Panc1 (cell line): ENCODE measurements at regions of chr13 and their contacts with region 1.

Region 1: GRCh38 chr13:100088644-100089464 is at the start of gene PCCA:
- DNase-seq: peak; percentile 45
- ATAC-seq: peak; percentile 97
- H3K4me3 ChIP-seq: peak within 1 kb of the TSS; percentile 78 to 82
- H3K27ac ChIP-seq: peak within 1 kb of the TSS; percentile 86
- H3K4me1 ChIP-seq: peaks cover 5% of the 10 kb centered on the region
- H3K27me3 ChIP-seq: no peaks in the 10 kb centered on the region
- CTCF ChIP-seq: no peak
- total RNA-seq, gene PCCA: 14.7 TPM

Region 2: DNA sequence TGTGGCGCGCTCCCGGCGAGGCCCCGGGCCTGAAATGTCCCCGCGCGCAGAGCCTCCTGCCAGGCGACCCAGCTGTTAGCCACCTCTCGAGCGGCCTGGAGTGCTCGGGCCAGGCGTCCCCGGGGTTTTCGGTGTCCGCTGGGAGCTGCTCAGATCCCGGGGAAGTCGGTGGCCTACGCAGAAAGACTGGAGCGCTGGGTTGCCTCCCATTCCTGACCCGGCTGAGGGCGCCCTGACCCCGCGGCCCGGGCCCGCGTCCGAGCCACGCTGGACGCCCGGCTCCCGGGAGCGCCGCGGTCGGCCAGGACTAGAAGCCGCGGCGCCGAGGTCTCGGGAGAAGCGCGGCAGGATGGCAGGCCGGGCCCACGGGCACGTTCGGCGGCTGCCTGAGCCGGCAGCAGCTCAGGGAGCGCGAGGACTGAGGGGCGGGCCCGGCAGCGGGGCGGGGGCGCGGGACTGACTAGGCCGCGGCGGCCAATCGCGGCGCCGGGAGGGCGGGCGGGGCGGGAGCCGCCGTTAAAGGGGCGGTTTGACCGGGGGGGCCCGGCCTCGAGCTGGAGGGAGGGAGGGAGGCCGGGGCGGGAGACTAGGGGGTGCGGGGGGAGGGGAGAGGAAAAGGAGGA is 108.5 kb before region 1 on chr13:
- CTCF ChIA-PET with region 1: interaction called, 10 read pairs
- POLR2A ChIA-PET with region 1: no interaction called
- in situ Hi-C with region 1: no loop called
- intact Hi-C with region 1: loop called (anchors 5 kb)
- DNase-seq: no peak
- ATAC-seq: peak; percentile 71
- H3K4me3 ChIP-seq: peak overlapping the region; percentile 75 to 84
- H3K27ac ChIP-seq: peak overlapping the region; percentile 79
- H3K4me1 ChIP-seq: peaks cover 21% of the 10 kb centered on the region
- H3K27me3 ChIP-seq: no peaks in the 10 kb centered on the region
- CTCF ChIP-seq: peak; percentile 21; the same call in 1 of the 2 replicates